ENCODE measurements at regions of chr20 and their contacts with region 1.

Region 1: GRCh38 chr20:33459599-33459998 is 16.0 kb upstream of the SNTA1 start:
- DNase-seq: no peak
- H3K4me3 ChIP-seq: no peak overlapping the region
- H3K27ac ChIP-seq: no peak overlapping the region
- H3K4me1 ChIP-seq: no peaks in the 10 kb centered on the region
- H3K27me3 ChIP-seq: no peaks in the 10 kb centered on the region
- CTCF ChIP-seq: no peak
- POLR2A ChIP-seq: no peak

Region 2: DNA sequence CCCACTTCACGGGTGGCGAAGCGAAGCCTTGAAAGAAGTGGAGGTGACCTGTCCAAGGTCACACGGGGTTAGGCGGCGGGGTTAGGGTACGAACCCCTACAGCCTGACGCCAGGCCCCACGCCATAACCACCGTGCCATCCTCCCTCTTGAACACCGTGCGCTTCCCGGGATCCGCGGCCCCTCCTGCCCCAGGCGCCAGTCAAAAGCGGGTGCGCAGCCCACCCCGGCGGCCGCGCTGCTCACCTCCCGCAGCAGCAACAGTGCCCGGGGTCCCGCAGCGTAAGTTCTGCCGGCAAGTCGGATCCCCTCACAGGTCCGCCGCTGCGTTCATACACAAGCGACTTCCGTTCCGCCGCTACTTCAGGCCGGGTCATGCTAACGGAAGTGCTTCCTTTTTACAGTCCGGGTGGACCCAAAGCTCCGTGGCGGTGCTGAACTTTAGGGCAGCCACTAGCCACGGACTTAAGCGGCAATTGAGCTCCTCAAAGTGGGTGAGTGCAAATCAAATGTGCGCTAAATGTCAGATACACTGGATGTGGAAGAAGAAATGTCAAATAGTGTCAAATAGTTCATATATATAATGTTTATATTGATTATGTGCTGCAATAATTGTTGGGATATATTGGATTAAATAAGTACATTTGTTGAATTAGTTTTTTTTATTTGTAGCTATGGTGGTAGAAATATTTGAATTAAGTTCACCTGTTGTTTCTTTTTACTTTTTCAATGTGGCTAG is 58.2 kb before region 1 on chr20 and contains the start of gene CDK5RAP1:
- intact Hi-C with region 1: no loop called
- DNase-seq: peak; percentile 83 to 85
- H3K4me3 ChIP-seq: peak within 1 kb of the TSS; percentile 78 to 96 (median 85)
- H3K27ac ChIP-seq: peak within 1 kb of the TSS in 2 of 3 donors; percentile 52 to 61
- H3K4me1 ChIP-seq: peaks cover 19 to 23% of the 10 kb centered on the region in 2 donors
- H3K27me3 ChIP-seq: no peaks in the 10 kb centered on the region
- CTCF ChIP-seq: peak in 1 of 6 experiments; percentile 15
- POLR2A ChIP-seq: peak in 1 of 2 donors; percentile 55
- total RNA-seq, gene CDK5RAP1: 26.6 to 41.8 (median 37.8) TPM

Region 3: GRCh38 chr20:33674295-33675135 is 214.9 kb after region 1 on chr20 and contains the start of gene NECAB3:
- intact Hi-C with region 1: loop called (anchors 5 kb)
- DNase-seq: peak; percentile 84 to 88
- H3K4me3 ChIP-seq: peak within 1 kb of the TSS; percentile 51 to 76 (median 72)
- H3K27ac ChIP-seq: peak within 1 kb of the TSS; percentile 81 to 85 (median 84)
- H3K4me1 ChIP-seq: peaks cover 17 to 30% of the 10 kb centered on the region in 2 donors
- H3K27me3 ChIP-seq: no peaks in the 10 kb centered on the region
- CTCF ChIP-seq: no peak
- POLR2A ChIP-seq: peak; percentile 20 to 85
- total RNA-seq, gene NECAB3: 65.2 to 99.8 (median 73.4) TPM